ENCODE measurements at regions of chr10 and their contacts with region 1.

Region 1: DNA sequence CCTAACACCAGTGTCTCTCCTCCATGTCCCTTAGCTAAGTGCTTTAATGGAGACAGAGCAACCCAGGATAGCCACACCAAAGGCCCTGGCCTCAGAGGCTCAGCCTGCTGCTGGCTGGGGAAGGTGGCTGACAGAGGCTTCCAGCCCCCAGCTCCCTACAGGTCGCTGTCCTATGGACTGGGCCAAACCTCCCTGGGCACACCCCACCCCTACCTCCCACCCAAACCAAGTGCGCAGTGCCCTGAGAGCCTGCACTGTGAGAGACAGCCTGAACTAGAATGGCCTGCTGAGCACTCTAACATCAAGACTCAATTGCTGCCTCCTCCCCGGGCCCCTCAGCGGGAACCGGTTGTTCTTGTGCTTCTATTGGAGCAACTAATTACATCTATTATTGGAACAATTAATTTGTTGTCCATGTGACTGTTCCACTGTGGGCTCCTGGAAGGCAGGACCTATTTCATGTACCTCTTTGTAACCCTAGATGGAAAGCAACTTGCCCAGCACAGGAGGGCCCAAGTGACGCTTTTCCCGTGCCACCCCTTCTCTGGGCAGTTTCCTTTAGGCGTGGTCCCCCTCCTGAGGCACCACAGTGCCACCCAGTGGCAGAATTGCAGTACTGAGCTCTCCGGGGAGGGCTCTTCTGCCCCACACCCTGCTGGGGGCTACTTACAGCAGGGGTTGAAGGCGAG is 63.6 kb upstream of the WAPL start:
- DNase-seq: peak; percentile 69
- H3K4me3 ChIP-seq: no peak overlapping the region
- H3K27ac ChIP-seq: no peak overlapping the region
- H3K4me1 ChIP-seq: no peaks in the 10 kb centered on the region
- H3K27me3 ChIP-seq: peaks cover 2 to 3% of the 10 kb centered on the region in 2 experiments
- CTCF ChIP-seq: peak; percentile 88 to 90
- POLR2A ChIP-seq: no peak

Region 2: GRCh38 chr10:85548034-85548433 is 1037.1 kb before region 1 on chr10:
- CTCF ChIA-PET with region 1: no interaction called
- POLR2A ChIA-PET with region 1: no interaction called
- dilution Hi-C with region 1: no loop called
- intact Hi-C with region 1: loop called (anchors 5 kb)
- DNase-seq: peak; percentile 9
- H3K4me3 ChIP-seq: no peak overlapping the region
- H3K27ac ChIP-seq: no peak overlapping the region
- H3K4me1 ChIP-seq: no peaks in the 10 kb centered on the region
- H3K27me3 ChIP-seq: no peaks in the 10 kb centered on the region
- CTCF ChIP-seq: peak; percentile 20 to 35
- POLR2A ChIP-seq: no peak

Region 3: DNA sequence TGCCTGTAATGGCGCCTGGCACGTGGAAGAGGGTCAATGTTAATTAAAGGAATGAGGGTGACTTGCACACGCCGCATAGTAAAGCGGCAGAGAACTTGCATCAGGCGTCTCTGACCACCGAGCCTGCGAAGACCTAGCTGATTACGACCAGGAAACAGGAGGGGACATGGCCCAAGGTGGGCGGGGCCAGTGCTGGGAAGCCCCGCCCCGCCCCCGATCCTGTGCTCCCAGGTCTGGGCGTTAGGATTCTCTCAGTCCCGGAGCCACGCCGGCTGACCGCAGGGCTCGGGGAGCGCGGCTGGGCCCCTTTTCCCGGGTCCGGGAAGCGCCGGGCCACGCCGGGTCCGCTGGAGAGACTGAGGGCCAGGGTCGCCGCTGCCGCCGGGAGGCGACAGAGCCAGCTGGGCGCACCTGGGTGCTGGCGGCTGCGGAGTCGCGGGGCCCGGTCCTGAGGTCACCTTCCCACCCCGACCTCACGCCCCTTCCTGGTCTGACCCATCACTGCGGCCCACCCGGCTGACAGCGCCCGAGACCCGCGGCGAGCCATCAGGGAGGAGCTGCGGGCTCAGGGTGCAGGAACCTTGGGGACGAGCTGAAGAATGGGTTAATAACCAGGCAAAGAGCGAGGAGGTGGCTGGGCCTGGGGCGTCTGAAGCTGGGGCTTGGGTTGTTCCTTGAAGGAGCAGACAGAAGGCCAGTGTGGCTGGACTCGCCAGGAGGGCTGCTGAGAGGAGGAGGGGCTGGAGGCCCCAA is 195.6 kb before region 1 on chr10:
- CTCF ChIA-PET with region 1: interaction called, 22 read pairs
- POLR2A ChIA-PET with region 1: no interaction called
- dilution Hi-C with region 1: no loop called
- intact Hi-C with region 1: no loop called
- DNase-seq: peak; percentile 29
- H3K4me3 ChIP-seq: peak overlapping the region in 1 of 3 experiments; percentile 7
- H3K27ac ChIP-seq: no peak overlapping the region
- H3K4me1 ChIP-seq: no peaks in the 10 kb centered on the region
- H3K27me3 ChIP-seq: peaks cover 21 to 23% of the 10 kb centered on the region in 2 experiments
- CTCF ChIP-seq: no peak
- POLR2A ChIP-seq: no peak

Region 4: DNA sequence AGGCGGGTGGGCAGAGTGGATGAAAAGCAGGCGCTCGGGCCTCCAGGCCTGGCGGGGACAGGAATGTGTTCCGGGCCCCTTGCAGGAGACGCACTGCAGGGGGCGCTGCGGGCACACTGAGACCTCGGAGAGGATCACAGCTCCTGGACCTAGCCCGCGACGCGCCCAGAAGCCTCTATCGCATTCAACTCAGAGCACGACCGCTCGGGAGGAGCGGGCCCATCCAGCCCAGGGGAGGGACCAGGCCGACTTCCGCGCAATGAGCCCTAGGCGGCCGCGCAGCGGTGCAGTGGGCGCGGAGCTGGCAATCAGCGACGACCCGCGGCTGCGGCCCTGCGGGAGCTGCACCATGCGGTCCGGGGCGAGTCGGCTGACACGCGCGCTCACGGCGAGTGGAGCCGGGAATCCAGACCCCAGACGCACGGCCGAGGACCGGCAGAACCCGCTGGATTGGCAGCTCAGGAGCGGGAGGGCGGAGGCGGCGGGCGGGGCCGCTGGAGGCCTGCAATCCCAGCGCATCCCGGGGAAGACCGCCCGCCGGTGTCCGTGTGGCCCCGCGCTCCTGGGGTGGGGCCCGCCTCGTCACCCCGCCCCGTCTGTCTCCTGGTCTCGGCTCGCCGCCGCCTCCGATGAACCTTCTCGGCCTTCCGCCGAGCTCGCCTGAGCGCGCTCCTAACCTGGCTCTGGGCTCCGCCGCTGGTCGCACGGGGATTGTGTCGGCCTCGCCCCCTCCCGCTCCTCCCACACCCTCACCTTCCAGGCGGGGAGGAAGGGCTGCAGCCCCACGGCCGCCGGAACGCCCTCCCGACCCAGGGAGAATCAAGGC is 185.1 kb before region 1 on chr10:
- CTCF ChIA-PET with region 1: interaction called, 213 read pairs
- POLR2A ChIA-PET with region 1: interaction called, 4 read pairs
- dilution Hi-C with region 1: no loop called
- intact Hi-C with region 1: loop called (anchors 1 kb)
- DNase-seq: peak; percentile 88
- H3K4me3 ChIP-seq: peak overlapping the region; percentile 29 to 57 (median 48)
- H3K27ac ChIP-seq: no peak overlapping the region
- H3K4me1 ChIP-seq: peaks cover 23% of the 10 kb centered on the region
- H3K27me3 ChIP-seq: peaks cover 18% of the 10 kb centered on the region in 2 experiments
- CTCF ChIP-seq: peak; percentile 92 to 98
- POLR2A ChIP-seq: no peak

Region 5: GRCh38 chr10:86411281-86411841 is 173.8 kb before region 1 on chr10:
- CTCF ChIA-PET with region 1: interaction called, 12 read pairs
- POLR2A ChIA-PET with region 1: no interaction called
- dilution Hi-C with region 1: no loop called
- intact Hi-C with region 1: no loop called
- DNase-seq: peak; percentile 64
- H3K4me3 ChIP-seq: no peak overlapping the region
- H3K27ac ChIP-seq: peak overlapping the region; percentile 73
- H3K4me1 ChIP-seq: peaks cover 17% of the 10 kb centered on the region
- H3K27me3 ChIP-seq: peaks cover 0 to 2% of the 10 kb centered on the region in 2 experiments
- CTCF ChIP-seq: no peak
- POLR2A ChIP-seq: no peak

Region 6: GRCh38 chr10:86521678-86522509 is 63.3 kb before region 1 on chr10 and contains the start of gene WAPL:
- CTCF ChIA-PET with region 1: interaction called, 4 read pairs
- POLR2A ChIA-PET with region 1: no interaction called
- dilution Hi-C with region 1: no loop called
- intact Hi-C with region 1: loop called (anchors 2 kb)
- DNase-seq: peak; percentile 96
- H3K4me3 ChIP-seq: peak within 1 kb of the TSS; percentile 96 to 99 (median 99)
- H3K27ac ChIP-seq: peak within 1 kb of the TSS; percentile 74
- H3K4me1 ChIP-seq: peaks cover 19% of the 10 kb centered on the region
- H3K27me3 ChIP-seq: no peaks in the 10 kb centered on the region
- CTCF ChIP-seq: no peak
- POLR2A ChIP-seq: peak; percentile 63
- total RNA-seq, gene WAPL: 35.1 and 35.3 TPM in 2 replicates

Region 7: DNA sequence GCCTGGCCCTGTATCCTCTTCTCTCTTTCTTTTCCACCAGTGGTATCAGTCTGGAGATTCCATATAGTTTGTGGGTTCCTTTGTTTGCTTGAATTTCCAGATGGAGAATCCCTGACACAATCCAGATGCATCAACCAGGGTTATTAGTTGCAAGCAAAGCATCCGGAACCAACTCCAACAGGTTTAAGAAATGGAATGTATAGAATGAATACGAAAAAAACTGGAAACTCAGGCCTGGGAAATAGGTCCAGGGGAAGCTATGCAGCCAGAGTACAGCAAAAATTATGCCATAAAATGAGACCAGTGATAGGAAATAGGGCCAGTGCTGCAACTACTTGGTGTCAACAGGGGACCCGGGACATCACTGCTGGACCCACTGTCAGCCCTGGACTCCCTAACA is 11.2 kb before region 1 on chr10:
- CTCF ChIA-PET with region 1: interaction called, 11 read pairs
- POLR2A ChIA-PET with region 1: no interaction called
- dilution Hi-C with region 1: no loop called
- intact Hi-C with region 1: no loop called
- DNase-seq: no peak
- H3K4me3 ChIP-seq: no peak overlapping the region
- H3K27ac ChIP-seq: no peak overlapping the region
- H3K4me1 ChIP-seq: no peaks in the 10 kb centered on the region
- H3K27me3 ChIP-seq: no peaks in the 10 kb centered on the region
- CTCF ChIP-seq: no peak
- POLR2A ChIP-seq: no peak

Measured in endothelial cell of umbilical vein (primary cell).